ENCODE measurements at regions of chr12 and their contacts with region 1.

Region 1: DNA sequence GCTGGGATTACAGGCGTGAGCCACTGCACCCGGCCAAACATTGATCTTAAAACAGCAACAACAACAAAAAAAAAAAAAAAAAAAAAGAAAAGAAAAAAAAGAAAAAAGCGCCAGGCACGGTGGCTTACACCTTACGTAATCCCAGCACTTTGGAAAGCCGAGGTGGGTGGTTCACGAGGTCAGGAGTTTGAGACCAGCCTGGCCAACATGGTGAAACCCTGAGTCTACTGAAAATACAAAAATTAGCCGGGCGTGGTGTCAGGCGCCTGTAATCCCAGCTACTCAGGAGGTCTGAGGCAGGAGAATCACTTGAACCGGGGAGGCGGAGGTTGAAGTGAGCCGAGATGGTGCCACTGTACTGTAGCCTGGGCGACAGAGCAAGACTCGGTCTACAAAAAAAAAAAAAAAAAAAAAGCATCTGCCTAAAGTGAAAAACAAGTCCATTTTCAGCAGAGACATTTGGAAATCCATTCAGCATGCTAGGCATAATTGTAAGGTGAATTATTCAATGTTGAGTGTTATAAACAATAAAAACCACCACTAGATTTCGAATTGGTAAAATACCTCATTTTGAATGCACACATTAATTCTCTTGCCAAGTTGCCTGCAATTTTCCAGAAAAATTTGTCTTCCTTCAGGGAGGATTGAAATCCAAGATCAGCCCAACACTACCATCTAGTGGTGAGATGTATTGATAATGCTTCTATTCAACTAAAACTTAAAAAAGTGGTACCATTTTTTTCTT is 8.0 kb upstream of the CERS5 start:
- DNase-seq: no peak
- H3K4me3 Mint-ChIP-seq: no peak overlapping the region
- H3K27ac Mint-ChIP-seq: no peak overlapping the region
- H3K4me1 Mint-ChIP-seq: peaks cover 1% of the 10 kb centered on the region
- H3K27me3 Mint-ChIP-seq: no peaks in the 10 kb centered on the region

Region 2: GRCh38 chr12:50074936-50075807 is 100.0 kb before region 1 on chr12:
- intact Hi-C with region 1: loop called (anchors 1 kb)
- DNase-seq: peak; percentile 69
- H3K4me3 Mint-ChIP-seq: no peak overlapping the region
- H3K27ac Mint-ChIP-seq: no peak overlapping the region
- H3K4me1 Mint-ChIP-seq: peaks cover 13% of the 10 kb centered on the region
- H3K27me3 Mint-ChIP-seq: peaks cover 8% of the 10 kb centered on the region